Endothelial cell of umbilical vein (primary cell): ENCODE measurements at regions of chr4 and their contacts with region 1.

Region 1: GRCh38 chr4:161696944-161697343 is 466.9 kb downstream of the FSTL5 start:
- DNase-seq: peak; percentile 74
- H3K4me3 ChIP-seq: no peak overlapping the region
- H3K27ac ChIP-seq: peak overlapping the region; percentile 87
- H3K4me1 ChIP-seq: peaks cover 22% of the 10 kb centered on the region
- H3K27me3 ChIP-seq: no peaks in the 10 kb centered on the region
- CTCF ChIP-seq: no peak
- POLR2A ChIP-seq: peak; percentile 54

Region 2: DNA sequence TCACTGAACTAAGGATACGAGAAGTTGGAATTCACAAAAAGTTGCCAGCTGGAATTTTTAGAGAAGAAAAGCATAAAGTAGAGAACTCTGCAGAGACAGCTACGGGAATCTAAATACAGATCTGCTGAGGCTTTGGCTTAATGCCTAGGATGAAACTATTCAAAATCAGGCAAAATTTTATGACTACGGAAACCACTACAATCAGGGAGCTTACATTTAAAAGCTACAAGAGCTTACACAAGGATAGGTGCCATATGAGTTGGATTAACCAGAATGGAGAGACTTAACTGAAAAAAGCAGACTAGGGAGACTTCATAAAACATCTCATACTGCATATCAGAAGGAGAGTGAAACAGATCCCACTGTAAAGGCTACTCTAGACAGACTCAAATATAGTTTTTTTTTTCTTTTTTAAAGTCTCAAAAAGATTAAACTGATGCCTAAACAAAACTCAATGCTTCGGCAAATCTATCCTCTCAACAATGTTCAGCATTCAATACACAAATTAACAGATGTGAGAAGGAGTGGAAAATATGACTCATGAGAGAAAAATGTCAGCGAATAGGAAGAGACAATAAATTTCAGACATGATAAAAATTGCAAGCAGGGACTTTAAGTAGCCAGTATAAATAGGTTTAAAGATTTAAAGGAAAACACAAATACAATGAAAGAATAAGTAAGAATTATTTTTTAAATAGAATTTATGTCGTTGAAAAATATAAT is 119.2 kb before region 1 on chr4:
- CTCF ChIA-PET with region 1: no interaction called
- POLR2A ChIA-PET with region 1: no interaction called
- dilution Hi-C with region 1: no loop called
- intact Hi-C with region 1: loop called (anchors 1 kb)
- DNase-seq: peak; percentile 92
- H3K4me3 ChIP-seq: peak overlapping the region in 2 of 3 experiments; percentile 5 to 38
- H3K27ac ChIP-seq: peak overlapping the region; percentile 89
- H3K4me1 ChIP-seq: peaks cover 27% of the 10 kb centered on the region
- H3K27me3 ChIP-seq: no peaks in the 10 kb centered on the region
- CTCF ChIP-seq: no peak
- POLR2A ChIP-seq: no peak

Region 3: GRCh38 chr4:161680146-161680545 is 16.8 kb before region 1 on chr4:
- CTCF ChIA-PET with region 1: interaction called, 7 read pairs
- POLR2A ChIA-PET with region 1: no interaction called
- dilution Hi-C with region 1: no loop called
- intact Hi-C with region 1: loop called (anchors 1 kb)
- DNase-seq: peak; percentile 85
- H3K4me3 ChIP-seq: no peak overlapping the region
- H3K27ac ChIP-seq: peak overlapping the region; percentile 73
- H3K4me1 ChIP-seq: peaks cover 24% of the 10 kb centered on the region
- H3K27me3 ChIP-seq: no peaks in the 10 kb centered on the region
- CTCF ChIP-seq: no peak
- POLR2A ChIP-seq: peak; percentile 26

Region 4: GRCh38 chr4:161714022-161714751 is 17.2 kb after region 1 on chr4:
- CTCF ChIA-PET with region 1: no interaction called
- POLR2A ChIA-PET with region 1: no interaction called
- dilution Hi-C with region 1: no loop called
- intact Hi-C with region 1: loop called (anchors 1 kb)
- DNase-seq: peak; percentile 85
- H3K4me3 ChIP-seq: no peak overlapping the region
- H3K27ac ChIP-seq: peak overlapping the region; percentile 61
- H3K4me1 ChIP-seq: peaks cover 16% of the 10 kb centered on the region
- H3K27me3 ChIP-seq: no peaks in the 10 kb centered on the region
- CTCF ChIP-seq: no peak
- POLR2A ChIP-seq: no peak

Region 5: DNA sequence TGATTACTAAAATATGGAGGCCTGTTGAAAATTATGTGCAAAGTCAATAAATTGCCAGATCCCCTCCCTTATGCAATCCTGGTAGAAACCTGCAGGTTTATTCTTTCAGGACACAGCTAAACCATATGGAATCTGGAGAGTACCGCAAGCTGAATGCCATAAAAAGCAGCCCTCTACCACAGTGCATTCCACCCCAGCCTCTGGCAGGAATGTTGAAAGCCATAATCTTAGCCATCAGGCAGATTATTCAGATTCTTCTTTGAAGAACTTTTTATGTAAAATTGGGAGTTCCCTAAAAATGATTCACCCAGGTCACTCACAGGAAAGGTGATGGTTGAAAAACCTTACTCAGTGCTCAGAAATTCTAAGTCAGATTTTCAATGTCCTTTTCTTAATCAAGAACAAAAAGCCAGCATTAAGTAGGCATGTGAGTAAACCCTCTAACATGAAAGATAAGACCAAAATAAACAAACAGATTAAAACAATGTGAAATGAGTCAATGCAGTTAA is 239.7 kb after region 1 on chr4:
- CTCF ChIA-PET with region 1: no interaction called
- POLR2A ChIA-PET with region 1: no interaction called
- dilution Hi-C with region 1: no loop called
- intact Hi-C with region 1: loop called (anchors 1 kb)
- DNase-seq: peak; percentile 91
- H3K4me3 ChIP-seq: no peak overlapping the region
- H3K27ac ChIP-seq: peak overlapping the region; percentile 74
- H3K4me1 ChIP-seq: peaks cover 37% of the 10 kb centered on the region
- H3K27me3 ChIP-seq: no peaks in the 10 kb centered on the region
- CTCF ChIP-seq: no peak
- POLR2A ChIP-seq: no peak

Region 6: DNA sequence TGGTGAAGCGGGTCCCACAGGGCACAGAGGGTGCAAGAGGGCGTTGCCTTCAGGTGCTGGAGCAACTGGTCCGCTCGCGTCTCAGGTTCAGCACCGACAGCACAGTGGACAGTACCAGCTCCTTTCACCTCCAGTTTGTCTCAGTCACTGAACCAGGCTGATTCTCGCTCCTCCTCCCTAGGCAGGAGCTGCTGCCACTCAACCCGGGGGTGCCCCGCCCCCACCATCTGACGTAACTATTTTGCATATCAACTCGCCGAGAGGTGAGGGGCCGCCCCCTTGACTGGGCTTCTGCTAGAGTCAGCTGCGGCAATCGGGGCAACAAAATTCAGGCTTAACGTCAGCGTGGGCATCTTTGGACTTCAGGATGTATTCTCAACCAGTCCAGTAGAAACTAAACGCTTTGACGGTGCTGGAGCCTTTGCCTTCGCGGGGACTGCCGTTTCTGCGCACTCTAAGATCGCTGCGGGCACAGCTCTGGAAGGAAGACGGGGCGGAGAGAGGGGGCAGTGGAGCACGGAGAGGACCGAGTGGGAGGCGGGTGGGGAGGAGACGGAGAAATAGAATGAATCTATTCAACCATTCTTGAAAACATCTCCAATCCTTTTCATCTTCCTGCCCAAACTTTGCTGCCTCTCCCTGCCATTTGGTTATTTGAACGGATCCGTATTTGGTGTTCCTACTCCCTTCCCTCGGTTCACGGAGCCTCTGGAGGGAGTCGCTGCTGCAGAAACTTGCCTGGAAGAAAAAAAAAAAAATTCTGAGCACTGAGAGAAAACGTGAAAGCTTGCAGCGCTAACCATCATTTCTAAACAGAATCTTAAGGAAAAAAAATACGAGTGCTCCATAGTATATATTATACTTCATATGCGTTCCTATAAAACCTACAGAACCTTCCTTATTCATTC is 467.2 kb after region 1 on chr4 and contains the start of gene FSTL5:
- CTCF ChIA-PET with region 1: no interaction called
- POLR2A ChIA-PET with region 1: no interaction called
- dilution Hi-C with region 1: no loop called
- intact Hi-C with region 1: loop called (anchors 10 kb)
- DNase-seq: peak; percentile 82
- H3K4me3 ChIP-seq: peak within 1 kb of the TSS; percentile 4 to 82 (median 79)
- H3K27ac ChIP-seq: peak within 1 kb of the TSS; percentile 5
- H3K4me1 ChIP-seq: peaks cover 13% of the 10 kb centered on the region
- H3K27me3 ChIP-seq: peaks cover 0 to 1% of the 10 kb centered on the region in 2 experiments
- CTCF ChIP-seq: no peak
- POLR2A ChIP-seq: peak; percentile 52
- total RNA-seq, gene FSTL5: 1.3 and 1.6 TPM in 2 replicates